ENCODE measurements at regions of chr11 and their contacts with region 1.

Region 1: GRCh38 chr11:69670158-69670845 is 4.9 kb downstream of the LTO1 start:
- DNase-seq: peak; percentile 70

Region 2: GRCh38 chr11:69101115-69101791 is 569.0 kb before region 1 on chr11:
- in situ Hi-C with region 1: loop called (anchors 25 kb)
- DNase-seq: peak; percentile 74